GM18951 (cell line): ENCODE measurements at regions of chr2 and their contacts with region 1.

Region 1: DNA sequence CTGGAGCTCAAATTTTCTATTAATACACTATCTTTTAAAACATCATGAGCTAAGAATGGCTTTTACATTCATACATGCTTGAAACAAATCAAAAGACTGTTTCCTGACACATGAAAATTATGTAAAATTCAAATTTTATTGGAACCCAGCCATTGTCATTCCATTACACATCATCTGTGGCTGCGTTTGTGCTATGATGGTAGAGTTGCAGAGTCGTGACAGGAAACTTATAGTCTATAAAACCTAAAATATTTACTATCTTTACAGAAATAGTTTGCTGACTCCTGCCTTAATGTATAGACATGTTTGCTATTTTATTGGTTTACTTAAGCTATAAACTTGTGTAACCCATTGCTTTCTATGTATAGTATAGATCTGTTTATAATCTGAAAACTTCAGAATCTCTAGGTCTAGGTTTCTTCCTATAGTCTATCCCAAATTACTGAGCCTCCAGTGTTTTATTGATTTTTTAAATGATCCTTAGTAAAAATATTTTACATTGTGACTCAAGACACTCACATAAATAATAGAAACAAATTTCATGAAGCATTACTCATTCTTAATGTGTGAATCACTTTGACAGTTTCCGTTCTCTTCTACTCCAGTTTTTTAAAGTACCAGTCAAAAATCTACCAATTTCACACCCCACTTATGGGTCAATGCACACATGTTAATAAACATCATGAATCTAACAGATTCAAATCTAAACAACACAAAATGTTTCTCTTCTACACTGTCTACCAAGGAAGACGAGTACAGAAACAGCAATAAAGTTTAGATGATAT is 26.4 kb upstream of the MRPL19 start:
- POLR2A ChIP-seq: no peak

Region 2: DNA sequence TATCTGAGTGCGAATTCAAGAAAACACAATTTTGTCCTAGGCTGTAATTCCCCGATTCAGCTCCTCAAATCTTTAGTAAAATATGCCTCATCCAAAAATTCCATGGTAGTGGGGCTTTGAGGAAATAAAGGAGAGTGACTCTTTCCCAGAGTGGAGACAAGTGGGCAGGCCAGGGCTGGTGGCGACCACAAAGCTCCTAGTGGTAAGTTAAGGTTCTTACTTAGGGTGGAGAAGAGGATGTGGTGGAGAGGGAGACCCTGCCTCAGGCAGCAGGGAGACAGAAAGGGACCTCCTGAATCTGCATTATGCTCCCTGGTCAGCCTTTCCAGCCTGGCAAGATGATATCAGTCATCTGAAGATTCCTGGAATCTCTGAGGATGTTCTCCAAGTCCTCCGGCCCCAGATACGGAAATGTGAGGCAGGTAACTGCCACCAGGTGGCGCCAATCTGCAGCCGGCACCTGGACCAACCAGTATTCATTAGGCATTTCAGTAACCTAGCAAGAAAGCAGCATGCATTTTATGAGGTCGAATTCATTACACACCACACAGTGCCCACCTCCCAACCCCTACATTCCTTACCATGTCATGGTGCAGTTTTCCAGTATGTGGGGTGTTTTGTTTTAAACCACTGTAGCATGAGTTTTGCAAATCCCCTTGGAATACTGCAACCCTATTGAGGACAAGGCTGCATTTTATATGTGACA is 555.3 kb before region 1 on chr2:
- in situ Hi-C with region 1: loop called (anchors 10 kb)
- POLR2A ChIP-seq: no peak

Region 3: DNA sequence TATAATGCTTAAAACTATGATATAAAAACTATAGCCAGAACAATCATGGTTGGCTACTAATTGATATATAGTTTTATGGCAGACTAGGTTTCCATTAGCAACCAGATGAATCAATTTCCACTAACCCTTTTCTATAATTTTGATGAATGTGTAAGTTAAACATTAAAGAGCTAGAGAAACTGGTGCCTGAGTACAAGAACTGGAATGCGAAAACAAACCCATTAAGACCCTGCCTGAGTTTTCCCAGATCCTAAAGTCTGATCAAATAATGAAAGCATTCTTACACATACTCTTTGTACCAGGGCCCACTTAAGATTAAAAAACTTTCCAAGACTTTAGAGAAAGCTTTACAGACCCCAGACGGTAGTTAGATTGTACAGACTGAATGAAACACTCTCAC is 47.7 kb after region 1 on chr2:
- in situ Hi-C with region 1: no loop called
- POLR2A ChIP-seq: no peak